ENCODE measurements at regions of chr9 and their contacts with region 1.

Region 1: DNA sequence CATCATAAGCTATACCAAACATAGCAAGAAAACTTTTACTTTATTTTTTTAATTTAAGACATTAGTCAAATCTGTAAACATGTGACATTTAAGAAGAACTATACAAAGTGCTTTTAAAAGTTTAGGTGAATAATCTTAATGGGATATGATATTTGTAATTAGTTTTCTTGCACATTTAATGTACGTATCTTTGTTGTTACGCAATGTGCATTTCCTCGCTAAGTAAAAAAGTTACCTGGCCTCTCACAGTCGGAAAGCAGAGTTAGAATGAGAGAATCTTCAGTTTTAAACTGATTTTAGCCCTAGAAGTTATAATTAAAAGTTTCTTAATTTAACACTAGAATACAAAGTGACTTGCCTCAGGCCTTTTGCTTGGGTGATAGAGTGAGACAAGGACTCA is 589.8 kb downstream of the DMRTA1 start:
- DNase-seq: no peak
- ATAC-seq: no peak
- H3K4me3 ChIP-seq: no peak overlapping the region
- H3K27ac ChIP-seq: no peak overlapping the region
- H3K4me1 ChIP-seq: no peaks in the 10 kb centered on the region
- H3K27me3 ChIP-seq: no peaks in the 10 kb centered on the region
- CTCF ChIP-seq: no peak
- POLR2A ChIP-seq: no peak
- RAD21 ChIP-seq: no peak

Region 2: GRCh38 chr9:22990349-22990748 is 46.1 kb before region 1 on chr9:
- CTCF ChIA-PET with region 1: no interaction called
- POLR2A ChIA-PET with region 1: no interaction called
- dilution Hi-C with region 1: no loop called
- in situ Hi-C with region 1: no loop called
- intact Hi-C with region 1: loop called (anchors 5 kb)
- DNase-seq: no peak
- ATAC-seq: no peak
- H3K4me3 ChIP-seq: no peak overlapping the region
- H3K27ac ChIP-seq: no peak overlapping the region
- H3K4me1 ChIP-seq: no peaks in the 10 kb centered on the region
- H3K27me3 ChIP-seq: no peaks in the 10 kb centered on the region
- CTCF ChIP-seq: no peak
- POLR2A ChIP-seq: no peak
- RAD21 ChIP-seq: no peak

Region 3: DNA sequence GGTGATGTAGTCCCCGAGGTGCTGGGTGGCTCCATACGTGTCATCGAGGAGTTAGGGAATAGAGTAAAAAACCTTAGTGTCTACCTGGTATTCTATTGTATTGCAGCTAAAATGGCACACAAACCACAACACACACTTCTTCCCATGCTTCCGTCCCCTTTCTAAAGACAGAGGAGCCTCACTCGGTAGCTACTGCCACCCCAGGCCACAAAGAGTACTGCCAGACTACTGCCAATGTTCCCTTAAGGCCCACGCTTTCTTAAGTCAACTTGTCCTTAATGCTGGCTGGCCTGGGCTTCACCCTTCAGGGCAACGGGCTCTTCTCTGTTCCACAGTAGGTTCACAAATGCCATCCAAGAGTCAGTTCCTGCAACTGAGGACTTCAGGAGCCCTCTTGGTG is 116.6 kb after region 1 on chr9:
- CTCF ChIA-PET with region 1: no interaction called
- POLR2A ChIA-PET with region 1: no interaction called
- dilution Hi-C with region 1: no loop called
- in situ Hi-C with region 1: no loop called
- intact Hi-C with region 1: no loop called
- DNase-seq: no peak
- ATAC-seq: no peak
- H3K4me3 ChIP-seq: no peak overlapping the region
- H3K27ac ChIP-seq: no peak overlapping the region
- H3K4me1 ChIP-seq: no peaks in the 10 kb centered on the region
- H3K27me3 ChIP-seq: no peaks in the 10 kb centered on the region
- CTCF ChIP-seq: no peak
- POLR2A ChIP-seq: no peak
- RAD21 ChIP-seq: no peak